Aorta (tissue), 5 donors: ENCODE measurements at regions of chr20 and their contacts with region 1.

Region 1: DNA sequence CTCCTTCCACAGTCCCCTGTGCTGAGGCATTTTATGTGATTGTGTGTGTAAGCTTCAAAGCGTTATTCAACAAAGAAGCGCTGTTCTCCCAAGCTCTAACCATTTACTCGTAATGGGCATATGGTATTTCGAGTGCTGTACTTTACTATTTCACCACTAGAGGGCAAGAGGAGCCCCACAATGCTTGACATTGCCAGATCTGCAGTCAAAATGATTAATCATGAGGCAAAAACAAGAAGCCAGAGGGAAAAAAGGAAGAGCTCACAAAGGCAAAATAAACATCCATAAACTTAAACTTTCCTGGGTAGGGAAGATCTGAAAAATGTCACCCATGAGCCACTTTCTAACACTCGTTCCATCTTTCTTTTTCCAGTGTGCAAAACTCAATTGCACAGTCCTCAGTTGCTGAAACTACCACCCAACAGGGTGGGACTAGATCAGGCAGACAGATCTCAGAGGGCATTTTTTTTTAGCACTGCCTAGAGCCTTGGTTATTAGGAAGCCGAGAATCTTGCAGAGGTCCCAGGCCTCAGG is 215.0 kb upstream of the PLCB4 start:
- DNase-seq: no peak
- ATAC-seq: peak; percentile 91
- H3K4me3 ChIP-seq: peak overlapping the region; percentile 31 to 69
- H3K27ac ChIP-seq: peak overlapping the region; percentile 33 to 67
- H3K4me1 ChIP-seq: peaks cover 4 to 9% of the 10 kb centered on the region in 2 donors
- H3K27me3 ChIP-seq: no peaks in the 10 kb centered on the region

Region 2: GRCh38 chr20:8901237-8902025 is 47.6 kb after region 1 on chr20:
- intact Hi-C with region 1: loop called in 1 of 2 experiments (anchors 5 kb)
- DNase-seq: peak; percentile 55 to 86
- ATAC-seq: peak; percentile 87
- H3K4me3 ChIP-seq: no peak overlapping the region
- H3K27ac ChIP-seq: peak overlapping the region; percentile 87 to 93
- H3K4me1 ChIP-seq: peaks cover 2 to 6% of the 10 kb centered on the region in 2 donors
- H3K27me3 ChIP-seq: no peaks in the 10 kb centered on the region

Region 3: GRCh38 chr20:9068851-9069663 is 215.2 kb after region 1 on chr20 and contains the start of gene PLCB4:
- intact Hi-C with region 1: loop called in 1 of 2 experiments (anchors 10 kb)
- DNase-seq: peak; percentile 51 to 79
- ATAC-seq: peak; percentile 19
- H3K4me3 ChIP-seq: peak within 1 kb of the TSS; percentile 80 to 90
- H3K27ac ChIP-seq: peak within 1 kb of the TSS; percentile 80 to 84
- H3K4me1 ChIP-seq: peaks cover 0 to 3% of the 10 kb centered on the region in 2 donors
- H3K27me3 ChIP-seq: no peaks in the 10 kb centered on the region
- total RNA-seq, gene PLCB4: 18.1 to 26.2 TPM

Region 4: DNA sequence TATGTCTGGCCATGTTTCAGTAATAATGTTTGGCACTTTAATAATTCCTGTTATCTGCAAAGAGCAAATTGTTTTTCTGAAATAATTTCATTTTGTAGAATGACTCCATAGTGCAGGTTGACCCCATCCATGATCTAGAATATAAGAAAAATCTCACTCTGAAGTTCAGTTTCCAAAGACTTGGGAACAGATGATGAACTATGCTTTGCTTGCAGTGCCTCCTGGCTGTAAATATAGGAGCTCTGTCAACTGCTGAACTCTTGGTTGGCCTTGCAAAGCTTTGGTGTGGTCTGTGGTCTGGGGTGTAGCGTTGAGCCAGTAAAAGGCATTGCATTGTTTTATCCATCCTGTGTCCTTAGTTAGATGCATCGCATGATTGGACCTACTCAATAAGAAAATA is 319.0 kb after region 1 on chr20:
- intact Hi-C with region 1: loop called (anchors 10 kb)
- DNase-seq: no peak
- ATAC-seq: no peak
- H3K4me3 ChIP-seq: no peak overlapping the region
- H3K27ac ChIP-seq: no peak overlapping the region
- H3K4me1 ChIP-seq: no peaks in the 10 kb centered on the region
- H3K27me3 ChIP-seq: no peaks in the 10 kb centered on the region

Region 5: DNA sequence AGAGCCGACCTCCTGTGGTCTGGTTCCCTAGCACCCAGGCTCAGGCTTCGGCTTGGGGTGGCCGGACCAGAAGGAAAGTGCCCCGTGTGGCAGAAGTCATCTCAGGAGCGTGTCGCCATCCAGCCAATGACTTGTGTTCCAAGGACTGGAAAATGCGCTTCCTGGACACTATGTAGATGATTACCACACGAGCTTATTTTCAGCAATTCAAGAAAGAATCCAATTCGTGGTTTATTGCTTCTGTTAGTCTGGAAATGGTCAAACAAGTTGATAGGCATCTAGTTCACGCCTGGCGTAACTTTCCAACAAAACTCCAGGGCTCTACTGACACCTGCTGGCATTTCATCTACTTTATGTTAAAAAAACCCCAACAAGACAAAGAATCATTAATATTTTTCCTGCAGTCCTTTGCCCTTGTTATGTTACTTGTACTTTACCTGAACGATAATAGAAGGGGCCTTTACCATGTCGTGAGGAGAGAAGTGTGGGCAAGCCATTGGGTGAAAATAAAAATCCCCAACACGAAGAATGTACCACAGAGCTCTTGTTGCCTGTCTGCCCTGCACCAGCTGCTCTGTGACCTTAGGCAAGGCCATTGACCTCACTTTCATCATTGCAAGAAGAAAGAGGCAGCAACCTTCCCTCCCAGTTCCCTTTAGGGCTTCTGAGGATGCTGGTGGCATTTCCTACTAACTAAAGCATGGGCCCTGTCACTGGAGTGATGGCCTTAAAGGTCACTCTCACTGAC is 505.9 kb after region 1 on chr20:
- intact Hi-C with region 1: loop called (anchors 5 kb)
- DNase-seq: peak; percentile 51 to 72
- ATAC-seq: peak; percentile 80
- H3K4me3 ChIP-seq: no peak overlapping the region
- H3K27ac ChIP-seq: peak overlapping the region in 1 of 2 donors; percentile 58
- H3K4me1 ChIP-seq: peaks cover 0 to 2% of the 10 kb centered on the region in 2 donors
- H3K27me3 ChIP-seq: no peaks in the 10 kb centered on the region

Region 6: GRCh38 chr20:9392892-9393857 is 539.3 kb after region 1 on chr20:
- intact Hi-C with region 1: loop called (anchors 2 to 10 kb)
- DNase-seq: peak; percentile 81 to 86
- ATAC-seq: peak; percentile 92
- H3K4me3 ChIP-seq: no peak overlapping the region
- H3K27ac ChIP-seq: no peak overlapping the region
- H3K4me1 ChIP-seq: peaks cover 3 to 7% of the 10 kb centered on the region in 2 donors
- H3K27me3 ChIP-seq: no peaks in the 10 kb centered on the region